ENCODE measurements at regions of chr2 and their contacts with region 1.

Region 1: GRCh38 chr2:236663287-236664101 is 93.9 kb downstream of the ACKR3 start:
- DNase-seq: peak; percentile 68 to 86 (median 79)
- ATAC-seq: peak; percentile 35 to 66 (median 56)
- H3K4me3 ChIP-seq: no peak overlapping the region
- H3K27ac ChIP-seq: peak overlapping the region in 10 of 12 donors; percentile 9 to 71 (median 62)
- H3K4me1 ChIP-seq: peaks cover 0 to 47% (median 37%) of the 10 kb centered on the region in 12 donors
- H3K27me3 ChIP-seq: peaks cover 0 to 3% (median 0%) of the 10 kb centered on the region in 9 donors
- CTCF ChIP-seq: no peak
- POLR2A ChIP-seq: no peak

Region 2: GRCh38 chr2:236607451-236608187 is 55.9 kb before region 1 on chr2:
- intact Hi-C with region 1: no loop called
- DNase-seq: no peak
- ATAC-seq: peak in 3 of 4 donors; percentile 58 to 64 (median 63)
- H3K4me3 ChIP-seq: no peak overlapping the region
- H3K27ac ChIP-seq: no peak overlapping the region
- H3K4me1 ChIP-seq: peaks cover 0 to 10% (median 0%) of the 10 kb centered on the region in 12 donors
- H3K27me3 ChIP-seq: no peaks in the 10 kb centered on the region
- CTCF ChIP-seq: peak in 1 of 12 donors; percentile 17
- POLR2A ChIP-seq: no peak

Region 3: GRCh38 chr2:236631281-236631855 is 32.1 kb before region 1 on chr2:
- intact Hi-C with region 1: loop called in 1 of 10 experiments (anchors 1 kb)
- DNase-seq: peak in 4 of 5 donors; percentile 39 to 82 (median 59)
- ATAC-seq: peak; percentile 21 to 90 (median 86)
- H3K4me3 ChIP-seq: no peak overlapping the region
- H3K27ac ChIP-seq: peak overlapping the region in 10 of 12 donors; percentile 3 to 72 (median 40)
- H3K4me1 ChIP-seq: peaks cover 0 to 28% (median 17%) of the 10 kb centered on the region in 12 donors
- H3K27me3 ChIP-seq: no peaks in the 10 kb centered on the region
- CTCF ChIP-seq: no peak
- POLR2A ChIP-seq: no peak

Region 4: DNA sequence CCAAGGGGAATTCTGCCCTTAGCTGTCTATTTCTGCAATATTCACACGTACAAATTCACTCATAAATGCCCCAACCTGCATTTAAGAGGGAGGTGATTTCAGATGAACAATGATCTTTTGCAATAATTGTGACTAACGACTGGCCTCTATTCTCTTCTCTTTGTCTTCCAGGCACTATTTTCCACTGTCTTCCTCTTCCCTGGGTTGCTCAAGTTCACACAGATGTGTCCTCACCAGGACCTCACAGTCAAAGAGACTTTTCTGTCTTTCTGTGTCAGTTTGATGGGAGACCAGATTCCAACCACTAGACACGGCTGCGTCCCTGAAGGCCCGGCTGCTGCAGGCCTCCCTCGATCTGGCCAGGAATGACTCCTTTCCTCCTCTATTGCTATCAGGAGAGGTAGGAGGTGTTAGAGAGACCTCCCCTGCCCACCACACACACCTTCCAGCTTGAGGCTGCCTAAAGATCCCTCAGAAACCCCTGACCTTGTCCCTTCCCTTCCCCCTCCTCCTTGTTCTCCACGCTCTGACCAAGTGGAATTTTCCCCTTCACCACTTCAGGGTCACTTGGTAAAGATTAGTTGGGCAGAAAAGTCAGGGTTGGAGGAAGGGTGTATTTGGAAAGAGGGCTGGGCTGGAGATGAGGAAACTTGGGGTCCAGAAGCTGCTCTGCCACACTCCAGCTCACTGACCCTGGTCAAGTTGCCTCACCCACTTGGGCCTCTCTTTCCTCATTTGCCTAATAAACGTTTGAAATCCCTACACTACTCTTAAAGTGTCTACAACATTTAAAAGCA is 313.0 kb after region 1 on chr2:
- intact Hi-C with region 1: loop called in 1 of 10 experiments (anchors 5 kb)
- DNase-seq: no peak
- ATAC-seq: peak in 1 of 4 donors; percentile 9
- H3K4me3 ChIP-seq: no peak overlapping the region
- H3K27ac ChIP-seq: peak overlapping the region in 4 of 12 donors; percentile 17 to 39 (median 32)
- H3K4me1 ChIP-seq: peaks cover 0 to 30% (median 0%) of the 10 kb centered on the region in 12 donors
- H3K27me3 ChIP-seq: peaks cover 0 to 5% (median 0%) of the 10 kb centered on the region in 9 donors
- CTCF ChIP-seq: no peak
- POLR2A ChIP-seq: no peak